OCI-LY7 (cell line): ENCODE measurements at regions of chr6 and their contacts with region 1.

Region 1: DNA sequence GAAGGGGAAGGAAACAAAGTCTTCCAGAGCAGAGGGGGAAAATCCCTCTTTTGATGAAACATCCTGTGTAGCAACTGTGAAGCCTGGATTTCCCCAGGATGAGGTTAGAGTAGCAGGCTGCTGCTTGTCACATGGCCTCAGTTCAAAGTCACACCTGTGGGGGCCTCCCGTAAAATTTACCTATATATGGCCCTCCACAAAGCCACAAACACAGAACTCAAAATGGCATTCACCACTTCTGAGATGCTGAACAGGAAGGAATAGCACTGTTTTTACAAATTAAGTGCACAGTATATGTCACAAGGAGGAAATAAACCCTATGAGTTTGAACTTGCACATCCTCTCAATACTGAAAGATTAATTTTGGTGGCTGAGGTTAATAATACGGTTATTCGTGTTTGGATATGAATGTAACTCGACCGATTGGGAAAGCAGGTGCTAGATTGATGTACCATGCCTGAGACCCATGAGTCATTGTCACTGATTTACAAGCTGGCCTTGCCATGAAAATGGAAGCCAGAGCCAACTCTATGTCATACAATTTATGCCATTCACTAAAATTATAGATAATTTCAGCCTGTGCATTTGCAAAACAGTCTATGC is 70.6 kb downstream of the SGK1 start:
- DNase-seq: peak; percentile 87
- H3K4me3 ChIP-seq: peak overlapping the region; percentile 46
- H3K27ac ChIP-seq: peak overlapping the region; percentile 91
- H3K4me1 ChIP-seq: peaks cover 57% of the 10 kb centered on the region
- CTCF ChIP-seq: no peak

Region 2: GRCh38 chr6:134216301-134217010 is 30.9 kb before region 1 on chr6:
- CTCF ChIA-PET with region 1: no interaction called
- POLR2A ChIA-PET with region 1: interaction called, 5 read pairs
- intact Hi-C with region 1: loop called (anchors 2 kb)
- DNase-seq: peak; percentile 66
- H3K4me3 ChIP-seq: peak overlapping the region; percentile 21
- H3K27ac ChIP-seq: peak overlapping the region; percentile 63
- H3K4me1 ChIP-seq: peaks cover 25% of the 10 kb centered on the region
- CTCF ChIP-seq: no peak

Region 3: GRCh38 chr6:134261766-134262165 is 14.4 kb after region 1 on chr6:
- CTCF ChIA-PET with region 1: no interaction called
- POLR2A ChIA-PET with region 1: interaction called, 17 read pairs
- intact Hi-C with region 1: no loop called
- DNase-seq: no peak
- H3K4me3 ChIP-seq: no peak overlapping the region
- H3K27ac ChIP-seq: no peak overlapping the region
- H3K4me1 ChIP-seq: no peaks in the 10 kb centered on the region
- CTCF ChIP-seq: no peak

Region 4: DNA sequence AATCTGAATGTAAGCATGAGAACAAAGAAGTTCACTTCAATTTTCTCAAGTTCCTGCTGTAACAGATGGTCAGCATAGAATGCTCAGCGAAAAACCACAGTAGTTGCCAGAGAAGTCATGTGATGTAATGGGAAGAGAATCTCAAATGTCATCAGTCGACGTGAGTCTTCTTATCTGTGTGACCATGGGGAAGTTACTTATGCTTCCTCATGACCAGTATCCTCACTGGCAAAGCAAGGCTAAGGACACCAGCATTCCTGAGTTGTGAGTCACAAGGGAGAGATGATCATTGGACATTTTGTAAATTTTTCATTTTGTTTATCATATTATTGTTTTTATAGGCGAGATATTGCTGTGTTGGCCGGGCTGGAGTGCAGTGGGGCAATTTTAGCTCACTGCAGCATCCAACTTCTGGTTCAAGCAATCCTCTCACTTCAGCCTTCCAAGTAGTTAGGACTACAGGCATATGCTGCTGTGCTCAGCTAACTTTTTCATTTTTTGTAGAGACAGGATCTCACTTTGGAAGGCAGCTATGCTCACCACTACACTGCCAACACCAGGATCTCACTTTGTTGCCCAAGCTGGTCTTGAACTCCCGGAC is 48.7 kb after region 1 on chr6:
- CTCF ChIA-PET with region 1: no interaction called
- POLR2A ChIA-PET with region 1: interaction called, 10 read pairs
- intact Hi-C with region 1: no loop called
- DNase-seq: peak; percentile 10
- H3K4me3 ChIP-seq: no peak overlapping the region
- H3K27ac ChIP-seq: no peak overlapping the region
- H3K4me1 ChIP-seq: no peaks in the 10 kb centered on the region
- CTCF ChIP-seq: no peak